ENCODE measurements at regions of chr17 and their contacts with region 1.

Region 1: DNA sequence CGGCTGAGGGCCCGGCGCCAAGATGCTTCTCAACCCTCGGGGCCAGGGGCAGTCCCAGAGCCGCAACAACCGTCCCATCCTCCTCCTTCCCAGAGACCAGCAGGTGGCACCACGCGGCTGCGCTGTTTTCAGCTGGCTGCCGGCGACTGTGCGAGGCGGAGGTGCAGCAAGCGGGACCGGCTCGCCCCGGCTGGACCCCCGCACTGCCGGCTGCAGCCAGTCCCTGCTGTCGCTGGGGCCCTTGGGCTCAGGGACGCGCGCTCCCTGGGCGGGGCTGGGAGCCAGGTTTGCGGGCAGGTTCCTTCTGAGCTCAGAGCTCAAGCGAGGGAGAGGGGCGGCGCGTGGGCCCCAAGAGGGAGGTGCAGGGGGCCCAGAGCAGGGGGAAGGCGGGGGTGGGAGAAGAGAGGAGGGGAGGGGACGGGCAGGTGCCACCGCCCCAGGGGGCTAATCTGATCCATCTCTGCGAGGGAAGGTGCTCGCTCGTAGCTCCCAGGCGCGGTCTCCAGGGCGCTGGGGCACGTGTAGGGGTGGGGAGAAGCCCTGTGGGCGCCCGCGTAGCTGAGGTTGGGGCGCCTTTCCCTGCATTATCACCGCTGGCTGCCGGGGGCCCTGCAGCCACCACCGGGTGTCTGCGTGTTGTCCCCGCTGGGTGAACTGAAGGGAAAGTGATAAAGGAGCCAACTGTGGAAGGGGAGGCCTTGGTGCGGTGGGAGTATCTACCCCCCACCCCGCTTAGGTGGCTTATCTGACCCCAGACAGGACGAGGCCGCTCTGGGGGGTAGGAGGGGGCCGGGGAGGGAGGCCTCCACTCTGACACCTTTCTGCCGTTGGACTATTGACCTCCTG is 24.2 kb downstream of the STAT5A start:
- DNase-seq: peak; percentile 94
- ATAC-seq: peak; percentile 69
- H3K4me3 Mint-ChIP-seq: peak overlapping the region; percentile 66
- H3K27ac Mint-ChIP-seq: peak overlapping the region; percentile 96
- H3K4me1 Mint-ChIP-seq: peaks cover 90% of the 10 kb centered on the region
- H3K27me3 Mint-ChIP-seq: no peaks in the 10 kb centered on the region

Region 2: GRCh38 chr17:42405963-42406495 is 93.5 kb after region 1 on chr17:
- CTCF ChIA-PET with region 1: interaction called, 175 read pairs
- POLR2A ChIA-PET with region 1: interaction called, 5 read pairs
- intact Hi-C with region 1: loop called (anchors 1 to 2 kb)
- DNase-seq: peak; percentile 91
- ATAC-seq: peak; percentile 69
- H3K4me3 Mint-ChIP-seq: no peak overlapping the region
- H3K27ac Mint-ChIP-seq: no peak overlapping the region
- H3K4me1 Mint-ChIP-seq: peaks cover 19% of the 10 kb centered on the region
- H3K27me3 Mint-ChIP-seq: no peaks in the 10 kb centered on the region

Region 3: GRCh38 chr17:42527273-42527703 is 214.8 kb after region 1 on chr17:
- CTCF ChIA-PET with region 1: interaction called, 6 read pairs
- POLR2A ChIA-PET with region 1: no interaction called
- intact Hi-C with region 1: loop called (anchors 2 to 5 kb)
- DNase-seq: peak; percentile 82
- ATAC-seq: peak; percentile 82
- H3K4me3 Mint-ChIP-seq: no peak overlapping the region
- H3K27ac Mint-ChIP-seq: no peak overlapping the region
- H3K4me1 Mint-ChIP-seq: peaks cover 37% of the 10 kb centered on the region
- H3K27me3 Mint-ChIP-seq: no peaks in the 10 kb centered on the region